ENCODE measurements at regions of chr6 and their contacts with region 1.

Region 1: DNA sequence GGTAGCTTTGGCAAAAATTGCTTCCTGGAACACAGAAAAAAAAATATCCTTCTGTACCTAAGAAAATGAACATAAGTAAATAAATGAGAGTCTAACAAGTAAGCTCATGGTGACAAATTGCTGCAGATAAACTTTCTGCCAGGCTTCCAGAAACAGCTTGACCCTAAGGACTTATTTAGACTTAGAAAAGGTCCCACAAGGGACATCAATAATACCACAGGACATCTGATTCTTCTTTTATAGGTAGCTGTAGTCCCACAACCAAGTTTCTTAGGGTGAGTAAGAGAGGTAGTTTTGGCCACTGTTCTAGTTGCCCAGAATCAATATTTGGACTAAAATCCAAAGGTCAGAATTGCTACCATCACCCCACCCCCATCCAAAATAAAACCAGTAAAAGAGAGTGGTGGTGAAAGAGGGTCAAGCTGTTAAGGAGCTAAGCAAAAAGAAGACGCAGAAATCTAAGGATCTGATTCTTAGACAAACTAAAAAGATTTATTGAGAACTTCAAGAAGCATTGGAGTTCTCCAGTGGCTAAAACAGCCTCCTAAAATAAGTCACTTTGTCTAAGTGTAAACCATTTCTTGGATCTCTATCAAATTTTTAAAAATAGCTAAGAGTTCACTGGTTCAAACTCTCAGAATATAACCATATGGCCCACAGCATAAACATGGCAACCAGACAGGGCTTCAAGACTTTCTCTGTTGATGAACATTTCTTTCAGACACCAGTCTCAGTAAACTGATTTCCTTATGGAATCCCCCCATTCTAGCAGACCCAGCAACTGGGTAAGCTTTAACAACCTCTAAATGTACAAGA is 180.6 kb downstream of the PTPRK start:
- DNase-seq: no peak
- H3K4me3 ChIP-seq: no peak overlapping the region
- H3K27ac ChIP-seq: no peak overlapping the region
- H3K4me1 ChIP-seq: no peaks in the 10 kb centered on the region
- H3K27me3 ChIP-seq: no peaks in the 10 kb centered on the region
- CTCF ChIP-seq: no peak

Region 2: DNA sequence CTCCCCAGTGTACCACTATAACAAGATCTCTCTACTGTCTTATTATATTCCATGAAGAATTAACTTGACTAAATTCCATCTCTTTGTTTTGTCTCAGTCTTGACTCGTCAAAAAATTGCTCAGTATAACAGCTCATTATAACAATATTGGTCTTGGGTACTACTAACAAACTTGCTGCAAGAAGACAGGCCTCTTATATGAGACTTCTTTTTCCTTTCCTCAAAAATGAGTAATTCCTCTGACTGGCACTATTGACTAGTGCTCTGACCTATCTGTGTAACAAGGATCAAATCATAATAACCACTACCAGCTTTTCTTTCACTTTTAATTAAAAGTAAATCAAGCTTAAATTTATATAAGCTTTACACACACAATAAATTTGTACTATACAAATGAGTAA is 347.7 kb before region 1 on chr6:
- CTCF ChIA-PET with region 1: no interaction called
- POLR2A ChIA-PET with region 1: no interaction called
- intact Hi-C with region 1: no loop called
- DNase-seq: no peak
- H3K4me3 ChIP-seq: no peak overlapping the region
- H3K27ac ChIP-seq: no peak overlapping the region
- H3K4me1 ChIP-seq: no peaks in the 10 kb centered on the region
- H3K27me3 ChIP-seq: no peaks in the 10 kb centered on the region
- CTCF ChIP-seq: no peak

Region 3: DNA sequence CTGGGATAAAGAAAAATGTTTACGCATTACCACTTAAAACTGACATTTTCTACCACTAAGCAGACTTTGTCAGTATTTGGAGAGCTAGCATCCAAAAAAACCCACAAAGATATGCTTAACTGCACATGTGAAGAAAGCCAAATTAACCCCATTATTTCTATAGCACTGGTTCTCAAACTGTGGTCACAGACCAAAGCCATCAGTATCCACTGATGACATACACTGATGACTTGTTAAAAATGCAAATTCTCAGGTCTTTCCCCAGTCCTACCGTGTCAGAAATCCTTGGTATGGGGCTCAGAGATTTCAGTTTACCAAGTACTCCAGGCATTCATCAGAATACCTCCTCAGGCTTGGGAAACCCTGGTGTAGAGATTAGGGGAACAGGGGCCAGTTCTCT is 49.6 kb before region 1 on chr6:
- CTCF ChIA-PET with region 1: no interaction called
- POLR2A ChIA-PET with region 1: no interaction called
- intact Hi-C with region 1: loop called (anchors 5 kb)
- DNase-seq: no peak
- H3K4me3 ChIP-seq: no peak overlapping the region
- H3K27ac ChIP-seq: no peak overlapping the region
- H3K4me1 ChIP-seq: no peaks in the 10 kb centered on the region
- H3K27me3 ChIP-seq: no peaks in the 10 kb centered on the region
- CTCF ChIP-seq: no peak

Region 4: DNA sequence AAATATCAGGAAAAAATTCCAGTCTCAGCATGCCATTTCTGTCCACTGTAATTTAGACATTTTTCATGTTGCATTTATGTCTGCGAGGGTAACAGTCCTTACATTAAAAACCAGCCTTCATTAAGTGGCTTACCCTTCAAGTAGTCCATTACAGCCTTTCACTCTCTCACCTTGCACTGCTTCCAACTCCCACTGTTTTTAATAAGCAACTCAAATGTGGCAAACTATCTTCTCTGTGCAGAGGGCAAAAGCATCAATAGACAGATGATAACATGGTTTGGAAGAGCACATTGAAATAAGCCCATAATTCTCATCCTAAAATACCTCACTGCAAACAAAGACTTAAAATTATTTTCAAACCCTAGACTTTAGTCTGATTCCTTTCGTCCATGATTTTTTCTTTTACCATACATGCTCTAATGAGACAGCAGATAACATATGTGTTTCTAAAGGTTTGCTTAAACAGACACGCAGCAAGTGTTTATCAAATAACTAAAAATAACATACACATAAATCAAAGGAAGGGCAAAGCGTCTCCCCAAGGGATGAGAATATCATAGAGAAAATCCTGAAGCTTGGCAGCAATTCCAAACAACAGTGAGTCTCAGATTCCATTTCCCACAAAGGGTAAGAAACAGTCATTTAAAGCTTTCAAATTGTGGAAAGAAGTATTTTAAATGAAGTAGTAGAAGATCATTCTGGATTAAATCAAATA is 50.1 kb after region 1 on chr6:
- CTCF ChIA-PET with region 1: no interaction called
- POLR2A ChIA-PET with region 1: no interaction called
- intact Hi-C with region 1: no loop called
- DNase-seq: no peak
- H3K4me3 ChIP-seq: no peak overlapping the region
- H3K27ac ChIP-seq: no peak overlapping the region
- H3K4me1 ChIP-seq: no peaks in the 10 kb centered on the region
- H3K27me3 ChIP-seq: no peaks in the 10 kb centered on the region
- CTCF ChIP-seq: no peak

Measured in PC-9 (cell line).